HEK293T (cell line): ENCODE measurements at regions of chr17 and their contacts with region 1.

Region 1: DNA sequence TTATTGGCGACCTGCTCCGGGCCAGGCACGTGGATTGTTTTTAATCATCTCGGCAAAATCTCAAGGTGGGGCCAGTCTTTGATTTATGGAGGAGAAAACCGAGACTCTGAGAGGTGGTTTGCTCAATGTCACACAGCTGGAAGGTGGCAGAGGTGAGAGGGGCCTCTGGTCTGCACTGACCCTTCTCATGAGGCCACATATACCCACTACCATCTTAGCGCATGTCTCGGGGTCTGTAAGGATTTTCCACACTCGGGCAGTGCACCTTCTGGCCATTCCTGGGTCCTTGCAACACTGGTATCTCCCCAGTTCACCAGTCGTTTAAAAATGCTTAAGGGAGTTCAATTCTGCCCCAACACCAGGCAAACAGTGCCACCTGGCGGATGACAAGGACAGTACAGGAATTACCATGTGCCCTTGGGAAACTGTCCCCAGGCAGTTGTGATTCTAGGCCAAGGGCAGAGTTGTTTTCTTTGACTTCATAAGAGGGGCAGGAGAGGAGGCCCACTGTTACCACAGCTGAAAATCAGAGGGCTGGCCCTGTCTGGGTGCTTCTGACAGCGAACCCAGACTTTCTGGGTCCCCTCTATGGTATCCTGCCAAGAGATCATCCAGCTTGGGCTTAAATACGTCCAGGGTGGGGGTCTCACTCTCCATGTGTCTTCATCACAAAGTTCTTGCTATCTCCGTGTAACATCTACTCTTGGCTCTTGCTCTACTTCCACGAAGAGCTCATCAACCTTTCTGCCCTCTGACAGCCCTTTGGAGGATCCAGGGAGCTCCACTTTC is 39.4 kb upstream of the RAI1 start:
- DNase-seq: peak; percentile 75

Region 2: GRCh38 chr17:17354560-17355349 is 287.1 kb before region 1 on chr17:
- CTCF ChIA-PET with region 1: interaction called, 13 read pairs
- POLR2A ChIA-PET with region 1: no interaction called
- DNase-seq: peak; percentile 82